GM13977 (cell line): ENCODE measurements at regions of chr12 and their contacts with region 1.

Region 1: GRCh38 chr12:32455607-32456071 is 56.3 kb downstream of the FGD4 start:
- DNase-seq: peak; percentile 49
- CTCF ChIP-seq: peak; percentile 57

Region 2: GRCh38 chr12:32344047-32344446 is 111.6 kb before region 1 on chr12:
- in situ Hi-C with region 1: no loop called
- DNase-seq: no peak
- CTCF ChIP-seq: no peak

Region 3: DNA sequence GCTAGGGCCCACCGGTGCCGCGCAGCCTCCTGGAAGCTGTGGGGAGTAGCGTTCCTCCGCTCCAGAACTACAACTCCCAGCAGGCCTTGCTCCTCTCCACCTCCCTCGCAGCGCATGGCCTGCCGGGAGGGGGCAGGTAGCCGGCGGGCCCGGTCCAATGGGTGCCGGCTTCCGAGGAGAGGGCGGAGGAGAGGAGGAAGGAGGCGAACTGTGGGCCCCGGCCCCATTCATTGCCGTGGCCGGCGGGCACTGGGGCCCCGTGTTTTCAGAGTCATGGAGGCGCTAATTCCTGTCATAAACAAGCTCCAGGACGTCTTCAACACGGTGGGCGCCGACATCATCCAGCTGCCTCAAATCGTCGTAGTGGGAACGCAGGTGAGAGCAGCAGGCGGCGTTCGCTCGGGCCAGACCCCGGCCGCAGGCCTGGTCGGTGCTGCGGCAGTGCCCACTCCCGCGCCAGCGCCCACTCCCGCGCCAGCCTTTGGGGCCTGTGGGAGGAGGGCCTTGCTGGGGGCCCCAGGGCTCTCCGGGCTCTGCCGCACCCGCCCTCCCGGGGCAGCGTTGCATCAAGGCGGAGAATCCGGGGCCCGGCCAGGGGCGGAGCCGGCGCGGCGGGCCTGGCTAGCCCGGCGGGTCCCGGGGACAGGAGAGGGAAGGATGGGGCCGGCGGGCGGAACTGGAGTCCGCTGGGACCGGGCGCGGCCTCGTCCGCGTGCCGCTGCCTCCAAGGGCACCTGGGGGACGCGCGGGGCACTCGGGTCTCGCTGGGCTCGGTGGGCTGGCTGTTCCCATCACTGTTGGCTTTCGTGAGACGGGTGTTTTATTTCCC is 223.7 kb after region 1 on chr12 and contains the start of gene DNM1L:
- in situ Hi-C with region 1: loop called (anchors 10 kb)
- DNase-seq: peak; percentile 95
- CTCF ChIP-seq: no peak

Region 4: DNA sequence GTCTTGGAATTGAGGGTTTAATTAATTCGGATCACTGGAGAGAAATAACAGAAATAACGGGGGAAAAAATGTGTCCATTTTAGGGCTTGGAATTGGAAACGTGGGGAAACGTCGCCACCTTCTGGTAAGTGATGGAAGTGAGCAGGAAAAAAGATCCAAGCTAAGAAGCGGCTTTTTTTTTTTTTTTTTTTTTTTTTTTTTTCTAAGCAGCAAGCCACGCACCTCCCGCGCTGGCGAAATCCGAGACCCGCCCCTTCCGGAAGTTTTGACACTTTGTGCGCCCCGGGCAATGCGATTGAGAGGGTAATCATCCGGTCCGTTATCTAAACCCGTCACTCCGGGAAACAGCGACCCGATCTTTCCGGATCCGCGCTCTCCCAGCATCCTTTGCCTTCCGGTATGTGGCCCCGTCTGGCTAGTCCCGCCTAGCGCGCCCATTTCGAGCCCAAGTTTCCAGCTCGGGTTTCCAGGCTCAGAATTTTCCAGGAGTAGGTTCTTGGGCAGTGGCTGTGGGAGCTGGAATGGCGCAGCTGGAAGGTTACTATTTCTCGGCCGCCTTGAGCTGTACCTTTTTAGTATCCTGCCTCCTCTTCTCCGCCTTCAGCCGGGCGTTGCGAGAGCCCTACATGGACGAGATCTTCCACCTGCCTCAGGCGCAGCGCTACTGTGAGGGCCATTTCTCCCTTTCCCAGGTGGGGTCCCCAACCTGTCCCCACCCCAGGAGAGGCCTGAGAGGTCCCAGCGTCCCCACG is 1566.6 kb after region 1 on chr12 and contains the start of gene ALG10:
- in situ Hi-C with region 1: loop called (anchors 25 kb)
- DNase-seq: peak; percentile 73
- CTCF ChIP-seq: peak; percentile 60